ENCODE measurements at regions of chr7 and their contacts with region 1.

Region 1: DNA sequence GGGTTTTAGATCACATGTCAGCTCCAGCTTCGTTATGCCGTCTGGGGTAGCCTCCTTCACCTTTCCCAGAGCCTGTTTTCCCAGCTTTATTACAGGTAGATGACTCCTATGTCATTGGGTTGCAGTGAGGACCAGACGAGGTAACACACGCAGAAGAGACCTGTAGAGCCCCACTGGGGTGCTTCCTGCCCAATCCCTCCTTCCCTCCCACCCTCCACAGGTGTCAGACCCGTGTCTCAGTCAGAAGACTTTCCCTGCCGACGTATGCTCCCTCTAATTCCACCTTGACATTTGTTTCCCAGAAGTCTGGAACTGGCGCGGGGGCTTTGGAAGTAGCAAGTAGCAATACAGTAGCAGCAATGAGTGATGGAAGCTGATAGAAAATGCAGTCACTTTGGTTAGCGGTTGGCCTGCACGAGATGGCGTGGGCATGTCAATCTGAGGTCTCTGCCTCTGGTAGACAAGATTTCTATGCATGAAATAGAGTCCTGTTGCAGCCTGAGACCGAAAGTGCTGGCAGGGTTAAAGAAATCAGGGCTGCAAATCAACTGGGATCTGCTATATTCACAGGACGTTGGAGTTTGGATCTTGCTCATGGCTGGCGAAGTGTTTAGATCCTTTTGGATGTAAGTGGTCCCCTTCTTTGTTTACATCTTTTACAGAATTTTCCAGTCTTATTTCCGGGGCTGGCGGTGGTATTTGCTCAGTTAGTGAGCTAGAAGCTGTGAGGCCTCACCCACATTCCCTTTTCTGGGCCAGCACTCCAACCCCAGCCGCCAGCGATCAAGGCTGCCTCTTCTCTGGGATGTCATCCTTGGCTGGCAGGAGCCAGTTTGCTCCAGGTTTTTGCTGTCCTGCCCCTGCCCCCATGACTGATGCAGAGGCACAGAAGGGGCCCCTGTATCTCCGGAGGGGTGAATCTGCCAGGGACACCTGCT is 78.3 kb upstream of the KMT2C start:
- DNase-seq: no peak
- ATAC-seq: no peak
- H3K4me3 ChIP-seq: no peak overlapping the region
- H3K27ac ChIP-seq: no peak overlapping the region
- H3K4me1 ChIP-seq: no peaks in the 10 kb centered on the region
- H3K27me3 ChIP-seq: no peaks in the 10 kb centered on the region
- CTCF ChIP-seq: no peak
- POLR2A ChIP-seq: no peak
- RAD21 ChIP-seq: no peak

Region 2: DNA sequence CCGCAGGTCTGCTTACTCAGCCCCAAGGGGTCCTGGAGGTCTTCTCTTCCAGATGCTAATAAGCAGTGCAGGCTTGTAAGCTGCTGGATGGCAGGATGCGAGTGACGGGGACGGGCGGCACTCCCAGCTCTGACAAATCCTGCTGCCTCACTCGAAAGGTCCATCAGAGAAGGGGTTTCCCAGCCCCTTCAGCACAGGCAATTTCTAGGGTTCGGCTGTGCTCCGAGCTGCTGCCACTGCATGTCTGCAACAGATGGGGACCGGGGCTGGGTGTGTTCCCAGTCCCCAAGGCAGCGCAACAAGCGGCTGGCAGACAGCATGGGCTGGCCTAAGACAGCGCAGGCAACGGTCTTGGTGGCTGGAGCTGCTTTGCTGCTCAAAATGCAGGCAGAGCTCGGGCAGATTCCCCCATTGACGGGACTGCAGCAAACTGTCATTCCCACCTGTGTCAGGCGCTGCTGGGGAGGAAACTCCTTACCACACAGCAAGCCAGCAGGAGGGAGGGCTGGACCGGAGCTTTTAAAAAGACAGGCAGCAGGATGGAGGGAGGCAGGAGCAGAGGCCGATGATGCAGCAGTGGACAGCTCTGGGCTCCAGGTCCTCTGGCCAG is 699.6 kb before region 1 on chr7:
- CTCF ChIA-PET with region 1: no interaction called
- POLR2A ChIA-PET with region 1: no interaction called
- dilution Hi-C with region 1: no loop called
- in situ Hi-C with region 1: no loop called
- intact Hi-C with region 1: no loop called
- DNase-seq: peak; percentile 6
- ATAC-seq: peak; percentile 66
- H3K4me3 ChIP-seq: no peak overlapping the region
- H3K27ac ChIP-seq: no peak overlapping the region
- H3K4me1 ChIP-seq: no peaks in the 10 kb centered on the region
- H3K27me3 ChIP-seq: peaks cover 71% of the 10 kb centered on the region
- CTCF ChIP-seq: no peak
- POLR2A ChIP-seq: no peak
- RAD21 ChIP-seq: no peak

Region 3: GRCh38 chr7:152582981-152583380 is 68.9 kb after region 1 on chr7:
- CTCF ChIA-PET with region 1: no interaction called
- POLR2A ChIA-PET with region 1: no interaction called
- dilution Hi-C with region 1: no loop called
- in situ Hi-C with region 1: no loop called
- intact Hi-C with region 1: loop called (anchors 2 kb)
- DNase-seq: no peak
- ATAC-seq: no peak
- H3K4me3 ChIP-seq: no peak overlapping the region
- H3K27ac ChIP-seq: no peak overlapping the region
- H3K4me1 ChIP-seq: no peaks in the 10 kb centered on the region
- H3K27me3 ChIP-seq: no peaks in the 10 kb centered on the region
- CTCF ChIP-seq: no peak
- POLR2A ChIP-seq: no peak
- RAD21 ChIP-seq: no peak

Measured in IMR-90 (cell line).